CD14-positive monocyte (primary cell): ENCODE measurements at regions of chr1 and their contacts with region 1.

Region 1: GRCh38 chr1:226736908-226737818 is 1.9 kb downstream of the ITPKB start:
- DNase-seq: peak in 2 of 3 donors; percentile 27 to 31
- H3K4me3 ChIP-seq: peak overlapping the region; percentile 68 to 97 (median 89)
- H3K4me3 Mint-ChIP-seq: peak overlapping the region; percentile 97 to 99
- H3K27ac ChIP-seq: peak overlapping the region in 1 of 2 donors; percentile 91
- H3K27ac Mint-ChIP-seq: peak overlapping the region in 2 of 7 donors; percentile 91 to 98
- H3K4me1 ChIP-seq: peaks cover 52 to 54% of the 10 kb centered on the region in 2 donors
- H3K4me1 Mint-ChIP-seq: peaks cover 50% of the 10 kb centered on the region
- H3K27me3 ChIP-seq: no peaks in the 10 kb centered on the region
- H3K27me3 Mint-ChIP-seq: no peaks in the 10 kb centered on the region
- CTCF ChIP-seq: peak; percentile 29

Region 2: GRCh38 chr1:226626577-226626956 is 110.6 kb before region 1 on chr1:
- intact Hi-C with region 1: loop called (anchors 5 to 10 kb)
- DNase-seq: peak; percentile 71 to 84 (median 75)
- H3K4me3 ChIP-seq: no peak overlapping the region
- H3K4me3 Mint-ChIP-seq: peak overlapping the region in 1 of 2 donors; percentile 64
- H3K27ac ChIP-seq: no peak overlapping the region
- H3K27ac Mint-ChIP-seq: no peak overlapping the region
- H3K4me1 ChIP-seq: peaks cover 3 to 5% of the 10 kb centered on the region in 2 donors
- H3K4me1 Mint-ChIP-seq: peaks cover 17% of the 10 kb centered on the region
- H3K27me3 ChIP-seq: no peaks in the 10 kb centered on the region
- H3K27me3 Mint-ChIP-seq: peaks cover 0 to 5% (median 4%) of the 10 kb centered on the region in 3 donors
- CTCF ChIP-seq: peak; percentile 96

Region 3: GRCh38 chr1:226687426-226687825 is 49.7 kb before region 1 on chr1:
- intact Hi-C with region 1: no loop called
- DNase-seq: peak; percentile 40 to 55 (median 41)
- H3K4me3 ChIP-seq: no peak overlapping the region
- H3K4me3 Mint-ChIP-seq: no peak overlapping the region
- H3K27ac ChIP-seq: no peak overlapping the region
- H3K27ac Mint-ChIP-seq: peak overlapping the region in 3 of 7 donors; percentile 64 to 80 (median 67)
- H3K4me1 ChIP-seq: no peaks in the 10 kb centered on the region
- H3K4me1 Mint-ChIP-seq: peaks cover 47% of the 10 kb centered on the region
- H3K27me3 ChIP-seq: no peaks in the 10 kb centered on the region
- H3K27me3 Mint-ChIP-seq: peaks cover 0 to 2% (median 0%) of the 10 kb centered on the region in 3 donors
- CTCF ChIP-seq: peak; percentile 34

Region 4: DNA sequence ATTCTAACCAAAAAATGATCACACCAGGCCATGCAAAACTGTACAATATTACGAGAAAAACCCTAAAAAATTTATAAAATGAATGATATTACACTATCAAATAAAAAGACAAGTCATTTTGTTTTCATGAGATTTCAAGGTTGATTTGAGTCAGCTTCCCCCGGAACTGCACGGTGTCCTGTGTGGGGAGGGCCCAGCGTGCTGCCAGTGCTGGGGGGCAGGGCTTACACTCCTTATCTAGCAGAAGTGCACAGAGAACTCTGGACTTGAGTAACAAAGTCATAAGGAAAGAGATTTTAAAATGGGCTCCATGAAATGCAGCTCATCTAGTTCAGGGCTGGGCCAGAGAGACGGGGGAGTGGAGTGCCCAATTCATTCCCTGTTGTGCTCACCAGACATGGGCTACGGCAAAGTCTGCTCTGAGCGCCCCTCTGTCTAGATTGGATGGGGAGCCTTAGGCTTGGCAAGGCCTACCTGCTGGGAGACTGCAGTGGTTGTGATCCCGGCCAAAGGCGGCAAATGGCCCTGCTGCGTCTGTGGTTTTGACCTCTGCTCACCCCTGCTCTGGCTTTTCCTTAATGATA is 253.1 kb after region 1 on chr1:
- intact Hi-C with region 1: no loop called
- DNase-seq: peak; percentile 5 to 30 (median 20)
- H3K4me3 ChIP-seq: peak overlapping the region in 1 of 3 experiments; percentile 46
- H3K4me3 Mint-ChIP-seq: peak overlapping the region in 1 of 2 donors; percentile 82
- H3K27ac ChIP-seq: peak overlapping the region; percentile 4 to 76
- H3K27ac Mint-ChIP-seq: peak overlapping the region; percentile 16 to 90 (median 74)
- H3K4me1 ChIP-seq: peaks cover 20 to 22% of the 10 kb centered on the region in 2 donors
- H3K4me1 Mint-ChIP-seq: peaks cover 21% of the 10 kb centered on the region
- H3K27me3 ChIP-seq: no peaks in the 10 kb centered on the region
- H3K27me3 Mint-ChIP-seq: peaks cover 0 to 2% (median 0%) of the 10 kb centered on the region in 3 donors
- CTCF ChIP-seq: no peak